MCF 10A (cell line): ENCODE measurements at regions of chr22 and their contacts with region 1.

Region 1: GRCh38 chr22:30396871-30397655 is at the start of gene SEC14L2:
- DNase-seq: peak; percentile 72
- H3K4me3 Mint-ChIP-seq: peak within 1 kb of the TSS; percentile 85
- H3K27ac Mint-ChIP-seq: peak within 1 kb of the TSS; percentile 81
- H3K4me1 Mint-ChIP-seq: peaks cover 29% of the 10 kb centered on the region
- H3K27me3 Mint-ChIP-seq: no peaks in the 10 kb centered on the region
- CTCF ChIP-seq: no peak
- total RNA-seq, gene SEC14L2: 20.0 and 29.1 TPM in 2 replicates

Region 2: GRCh38 chr22:30340911-30341685 is 56.0 kb before region 1 on chr22:
- CTCF ChIA-PET with region 1: no interaction called
- POLR2A ChIA-PET with region 1: no interaction called
- intact Hi-C with region 1: no loop called
- DNase-seq: no peak
- H3K4me3 Mint-ChIP-seq: no peak overlapping the region
- H3K27ac Mint-ChIP-seq: no peak overlapping the region
- H3K4me1 Mint-ChIP-seq: no peaks in the 10 kb centered on the region
- H3K27me3 Mint-ChIP-seq: no peaks in the 10 kb centered on the region
- CTCF ChIP-seq: no peak

Region 3: GRCh38 chr22:30408414-30409104 is 11.5 kb after region 1 on chr22:
- CTCF ChIA-PET with region 1: interaction called, 17 read pairs
- POLR2A ChIA-PET with region 1: interaction called, 90 read pairs
- intact Hi-C with region 1: no loop called
- DNase-seq: peak; percentile 92
- H3K4me3 Mint-ChIP-seq: no peak overlapping the region
- H3K27ac Mint-ChIP-seq: peak overlapping the region; percentile 73
- H3K4me1 Mint-ChIP-seq: peaks cover 47% of the 10 kb centered on the region
- H3K27me3 Mint-ChIP-seq: no peaks in the 10 kb centered on the region
- CTCF ChIP-seq: no peak

Region 4: GRCh38 chr22:30413745-30414524 is 16.9 kb after region 1 on chr22:
- CTCF ChIA-PET with region 1: interaction called, 17 read pairs
- POLR2A ChIA-PET with region 1: interaction called, 532 read pairs
- intact Hi-C with region 1: no loop called
- DNase-seq: peak; percentile 38
- H3K4me3 Mint-ChIP-seq: peak overlapping the region; percentile 12
- H3K27ac Mint-ChIP-seq: peak overlapping the region; percentile 66
- H3K4me1 Mint-ChIP-seq: peaks cover 41% of the 10 kb centered on the region
- H3K27me3 Mint-ChIP-seq: no peaks in the 10 kb centered on the region
- CTCF ChIP-seq: no peak

Region 5: GRCh38 chr22:30565341-30565740 is 168.3 kb after region 1 on chr22:
- CTCF ChIA-PET with region 1: no interaction called
- POLR2A ChIA-PET with region 1: no interaction called
- intact Hi-C with region 1: no loop called
- DNase-seq: no peak
- H3K4me3 Mint-ChIP-seq: no peak overlapping the region
- H3K27ac Mint-ChIP-seq: no peak overlapping the region
- H3K4me1 Mint-ChIP-seq: peaks cover 5% of the 10 kb centered on the region
- H3K27me3 Mint-ChIP-seq: peaks cover 23% of the 10 kb centered on the region
- CTCF ChIP-seq: no peak